T-cell (primary cell): ENCODE measurements at regions of chr18 and their contacts with region 1.

Region 1: GRCh38 chr18:21865043-21865442 is 124.5 kb downstream of the MIB1 start:
- DNase-seq: no peak
- ATAC-seq: no peak
- H3K4me3 ChIP-seq: no peak overlapping the region
- H3K4me3 Mint-ChIP-seq: no peak overlapping the region
- H3K27ac ChIP-seq: no peak overlapping the region
- H3K27ac Mint-ChIP-seq: no peak overlapping the region
- H3K4me1 ChIP-seq: no peaks in the 10 kb centered on the region
- H3K4me1 Mint-ChIP-seq: no peaks in the 10 kb centered on the region
- H3K27me3 ChIP-seq: no peaks in the 10 kb centered on the region
- H3K27me3 Mint-ChIP-seq: no peaks in the 10 kb centered on the region

Region 2: GRCh38 chr18:21704603-21705364 is 160.3 kb before region 1 on chr18 and contains the start of gene ABHD3:
- CTCF ChIA-PET with region 1: no interaction called
- POLR2A ChIA-PET with region 1: interaction called in 1 of 2 experiments, 17 read pairs
- DNase-seq: peak; percentile 82 to 96 (median 89)
- ATAC-seq: peak; percentile 93 to 98 (median 96)
- H3K4me3 ChIP-seq: peak within 1 kb of the TSS; percentile 84 to 98
- H3K4me3 Mint-ChIP-seq: peak within 1 kb of the TSS; percentile 91 to 97 (median 97)
- H3K27ac ChIP-seq: peak within 1 kb of the TSS; percentile 84
- H3K27ac Mint-ChIP-seq: peak within 1 kb of the TSS; percentile 92 to 95
- H3K4me1 ChIP-seq: peaks cover 3 to 18% of the 10 kb centered on the region in 2 experiments
- H3K4me1 Mint-ChIP-seq: peaks cover 23 to 32% (median 31%) of the 10 kb centered on the region in 3 donors
- H3K27me3 ChIP-seq: no peaks in the 10 kb centered on the region
- H3K27me3 Mint-ChIP-seq: no peaks in the 10 kb centered on the region
- total RNA-seq, gene ABHD3: 33.1 to 42.4 (median 42.1) TPM

Region 3: DNA sequence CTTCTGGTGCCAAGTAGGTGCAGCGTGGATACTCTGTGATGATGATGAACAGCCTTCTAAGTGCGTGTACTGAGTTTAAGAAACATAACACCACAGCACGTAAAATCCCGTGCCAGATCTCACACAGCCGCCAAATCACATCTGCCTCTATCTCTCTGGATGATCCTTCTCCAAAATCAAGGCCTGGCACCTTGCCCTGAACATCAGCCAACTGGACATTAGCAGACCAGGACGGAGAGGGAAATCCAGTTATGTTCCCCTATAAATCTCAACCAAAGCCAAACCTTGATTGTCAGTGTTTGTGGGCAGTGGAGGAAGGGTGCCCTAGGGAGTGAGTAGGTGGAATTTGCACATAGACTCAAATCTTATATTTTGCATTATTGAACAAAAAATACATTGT is 39.8 kb after region 1 on chr18:
- CTCF ChIA-PET with region 1: no interaction called
- POLR2A ChIA-PET with region 1: no interaction called
- DNase-seq: no peak
- ATAC-seq: no peak
- H3K4me3 ChIP-seq: no peak overlapping the region
- H3K4me3 Mint-ChIP-seq: no peak overlapping the region
- H3K27ac ChIP-seq: no peak overlapping the region
- H3K27ac Mint-ChIP-seq: no peak overlapping the region
- H3K4me1 ChIP-seq: no peaks in the 10 kb centered on the region
- H3K4me1 Mint-ChIP-seq: no peaks in the 10 kb centered on the region
- H3K27me3 ChIP-seq: peaks cover 0 to 11% of the 10 kb centered on the region in 2 experiments
- H3K27me3 Mint-ChIP-seq: peaks cover 16 to 20% of the 10 kb centered on the region in 2 donors

Region 4: GRCh38 chr18:22015156-22015555 is 150.1 kb after region 1 on chr18:
- CTCF ChIA-PET with region 1: no interaction called
- POLR2A ChIA-PET with region 1: no interaction called
- DNase-seq: no peak
- ATAC-seq: no peak
- H3K4me3 ChIP-seq: no peak overlapping the region
- H3K4me3 Mint-ChIP-seq: no peak overlapping the region
- H3K27ac ChIP-seq: no peak overlapping the region
- H3K27ac Mint-ChIP-seq: no peak overlapping the region
- H3K4me1 ChIP-seq: no peaks in the 10 kb centered on the region
- H3K4me1 Mint-ChIP-seq: no peaks in the 10 kb centered on the region
- H3K27me3 ChIP-seq: no peaks in the 10 kb centered on the region
- H3K27me3 Mint-ChIP-seq: peaks cover 3 to 15% of the 10 kb centered on the region in 2 donors